CD8-positive, alpha-beta T cell (primary cell): ENCODE measurements at regions of chr4 and their contacts with region 1.

Region 1: DNA sequence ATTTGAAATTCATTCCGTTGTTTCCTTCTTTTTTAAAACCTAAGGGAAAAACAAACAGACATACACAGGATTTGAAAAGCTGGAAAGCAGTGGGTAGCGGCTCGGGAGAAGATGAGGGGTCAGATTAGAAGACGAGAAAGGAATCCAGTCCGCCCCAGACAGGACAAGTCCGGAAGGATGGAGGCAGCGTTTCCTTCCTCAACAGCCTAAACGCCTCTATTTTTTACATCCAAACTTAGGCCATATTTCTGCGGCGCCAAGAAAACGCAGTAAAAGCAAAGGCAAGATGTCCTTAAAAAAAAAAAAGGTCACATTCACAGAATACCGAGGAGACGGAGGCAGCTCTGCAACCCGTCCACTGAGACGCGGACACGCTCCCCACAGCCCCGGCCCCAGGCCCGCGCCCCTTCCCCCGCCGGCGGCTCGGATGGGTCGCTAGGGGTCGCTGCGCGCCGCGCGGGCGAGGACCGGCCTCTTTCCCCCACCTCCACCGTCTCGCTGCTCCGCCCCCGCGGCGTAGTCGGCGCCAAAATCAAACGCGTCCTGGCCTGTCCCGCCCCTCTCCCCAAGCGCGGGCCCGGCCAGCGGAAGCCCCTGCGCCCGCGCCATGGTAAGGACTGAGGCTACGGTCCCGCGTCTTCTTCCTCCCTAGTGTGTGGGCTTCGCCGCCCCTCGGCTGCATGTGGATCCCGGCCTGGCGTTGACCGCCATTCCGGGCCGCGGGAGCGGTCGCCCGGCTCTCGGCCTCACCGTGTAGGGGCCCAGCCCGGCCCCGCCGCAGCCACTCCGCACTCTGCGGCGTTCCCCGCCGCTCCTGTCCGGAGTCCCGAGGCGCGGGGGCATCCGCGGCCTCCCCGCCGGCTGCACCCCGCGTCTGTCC is at the start of gene MND1:
- DNase-seq: peak; percentile 77 to 93 (median 89)
- ATAC-seq: peak; percentile 93
- H3K4me3 ChIP-seq: peak within 1 kb of the TSS; percentile 49 to 66
- H3K4me3 Mint-ChIP-seq: peak within 1 kb of the TSS; percentile 87
- H3K27ac ChIP-seq: no peak within 1 kb of the TSS
- H3K27ac Mint-ChIP-seq: peak within 1 kb of the TSS; percentile 58
- H3K4me1 ChIP-seq: no peaks in the 10 kb centered on the region
- H3K4me1 Mint-ChIP-seq: peaks cover 6% of the 10 kb centered on the region
- H3K27me3 ChIP-seq: no peaks in the 10 kb centered on the region
- H3K27me3 Mint-ChIP-seq: no peaks in the 10 kb centered on the region
- CTCF ChIP-seq: peak; percentile 99
- total RNA-seq, gene MND1: not detected

Region 2: DNA sequence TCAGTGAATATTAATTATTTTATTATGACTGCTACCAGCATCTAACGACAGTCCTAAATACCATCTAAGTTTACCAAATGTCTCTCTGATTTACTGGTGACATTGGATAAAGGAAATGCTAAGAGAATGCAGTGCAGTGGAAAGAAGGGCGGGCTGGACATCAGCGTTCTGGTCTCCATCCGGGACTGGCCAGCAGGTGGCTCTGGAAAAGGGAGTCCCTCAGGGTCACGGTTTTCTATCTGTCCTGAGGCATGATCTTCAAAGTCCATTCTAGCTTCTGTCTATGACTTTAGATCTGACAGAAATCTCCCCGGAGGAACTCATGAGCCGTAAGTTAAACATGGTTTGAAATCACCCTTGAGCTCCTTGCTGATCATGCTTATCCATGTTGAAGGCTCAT is 136.8 kb before region 1 on chr4:
- CTCF ChIA-PET with region 1: no interaction called
- POLR2A ChIA-PET with region 1: no interaction called
- intact Hi-C with region 1: no loop called
- DNase-seq: no peak
- ATAC-seq: no peak
- H3K4me3 ChIP-seq: no peak overlapping the region
- H3K4me3 Mint-ChIP-seq: no peak overlapping the region
- H3K27ac ChIP-seq: no peak overlapping the region
- H3K27ac Mint-ChIP-seq: no peak overlapping the region
- H3K4me1 ChIP-seq: peaks cover 20% of the 10 kb centered on the region
- H3K4me1 Mint-ChIP-seq: peaks cover 23% of the 10 kb centered on the region
- H3K27me3 ChIP-seq: no peaks in the 10 kb centered on the region
- H3K27me3 Mint-ChIP-seq: no peaks in the 10 kb centered on the region
- CTCF ChIP-seq: no peak

Region 3: DNA sequence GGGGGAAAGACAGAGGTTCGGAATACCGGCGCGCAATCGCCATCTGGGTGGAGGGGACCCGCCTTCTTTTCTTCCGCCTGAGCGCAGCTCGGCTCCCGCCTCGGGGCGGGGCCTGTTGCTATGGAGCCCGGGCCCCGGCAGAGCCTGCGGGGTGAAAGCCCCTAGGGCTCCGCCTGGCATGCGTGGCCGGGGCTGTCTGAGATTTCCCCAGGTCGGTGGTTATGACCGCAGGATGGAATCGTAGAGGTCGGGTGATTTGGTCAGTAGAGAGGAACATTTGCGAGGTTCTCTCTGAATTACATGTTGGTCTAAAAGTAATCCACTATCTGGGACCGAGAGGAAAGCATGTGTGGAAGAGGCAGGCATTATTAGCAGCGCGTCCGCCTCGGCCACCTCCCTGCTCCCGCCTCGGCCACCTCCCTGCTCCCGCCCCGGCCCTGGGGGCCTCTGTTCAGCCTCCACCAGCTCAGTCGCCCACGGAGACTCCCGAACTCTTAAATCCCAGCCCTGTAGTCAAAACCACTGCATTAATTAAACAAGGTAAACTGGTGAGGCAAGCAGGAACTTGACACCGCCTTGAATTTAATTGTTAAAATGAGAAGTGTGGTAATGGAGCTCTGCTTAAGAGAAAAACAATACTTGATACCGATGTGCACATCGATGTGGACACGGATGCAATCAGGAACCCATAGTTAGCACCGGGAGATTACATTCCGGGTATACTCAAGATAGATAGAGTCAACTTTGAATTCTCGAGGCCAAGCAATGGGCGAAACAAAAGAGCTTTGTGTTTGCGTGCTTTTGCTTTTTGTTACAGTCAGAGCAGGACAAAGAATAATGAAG is 95.0 kb before region 1 on chr4:
- CTCF ChIA-PET with region 1: no interaction called
- POLR2A ChIA-PET with region 1: no interaction called
- intact Hi-C with region 1: loop called in 1 of 2 experiments (anchors 5 kb)
- DNase-seq: peak; percentile 59 to 94 (median 81)
- ATAC-seq: peak; percentile 98
- H3K4me3 ChIP-seq: peak overlapping the region; percentile 53 to 57
- H3K4me3 Mint-ChIP-seq: peak overlapping the region; percentile 89
- H3K27ac ChIP-seq: peak overlapping the region; percentile 46 to 60
- H3K27ac Mint-ChIP-seq: peak overlapping the region; percentile 85
- H3K4me1 ChIP-seq: peaks cover 11% of the 10 kb centered on the region
- H3K4me1 Mint-ChIP-seq: peaks cover 20% of the 10 kb centered on the region
- H3K27me3 ChIP-seq: no peaks in the 10 kb centered on the region
- H3K27me3 Mint-ChIP-seq: no peaks in the 10 kb centered on the region
- CTCF ChIP-seq: no peak

Region 4: DNA sequence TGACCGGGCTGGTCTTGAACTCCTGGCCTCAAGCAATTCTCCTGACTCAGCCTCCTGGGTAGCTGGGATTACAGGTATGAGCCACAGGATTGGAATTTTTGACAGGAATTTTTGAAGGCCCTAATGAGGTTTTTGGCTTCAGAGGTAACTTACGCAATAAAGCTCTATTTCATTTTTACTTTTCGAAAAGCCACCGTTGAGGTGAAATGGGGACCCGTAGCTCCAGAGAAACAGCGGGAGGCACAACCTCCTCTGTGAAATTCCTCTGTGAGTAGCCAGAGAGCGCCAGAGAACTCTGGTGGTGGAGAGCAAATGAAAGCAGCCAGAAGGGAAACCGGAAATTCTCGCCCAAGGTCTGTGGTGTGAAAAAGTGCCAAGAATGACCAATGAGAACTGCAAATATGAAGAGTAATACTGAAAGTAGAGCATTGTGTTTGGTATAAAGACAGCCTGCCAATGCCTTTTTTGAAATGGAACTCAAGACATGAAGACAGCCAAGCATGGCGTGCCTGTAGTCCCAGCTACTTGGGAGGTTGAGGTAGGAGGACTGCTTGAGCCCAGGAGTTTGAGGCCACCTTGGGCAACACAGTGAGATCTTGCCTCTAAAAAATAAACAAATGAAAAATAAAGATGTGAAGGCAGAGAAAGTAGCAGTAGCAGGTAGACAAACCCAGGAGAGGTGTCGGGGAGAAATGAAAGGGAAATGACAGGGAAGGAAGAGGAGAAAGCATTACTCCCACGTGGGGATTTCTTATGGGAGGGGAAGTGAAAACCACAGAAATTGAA is 88.8 kb after region 1 on chr4:
- CTCF ChIA-PET with region 1: interaction called, 18 read pairs
- POLR2A ChIA-PET with region 1: no interaction called
- intact Hi-C with region 1: loop called (anchors 2 to 5 kb)
- DNase-seq: peak; percentile 29 to 88 (median 61)
- ATAC-seq: peak; percentile 78
- H3K4me3 ChIP-seq: peak overlapping the region; percentile 0 to 46
- H3K4me3 Mint-ChIP-seq: peak overlapping the region; percentile 77
- H3K27ac ChIP-seq: peak overlapping the region; percentile 6 to 63
- H3K27ac Mint-ChIP-seq: peak overlapping the region; percentile 73
- H3K4me1 ChIP-seq: peaks cover 52% of the 10 kb centered on the region
- H3K4me1 Mint-ChIP-seq: peaks cover 72% of the 10 kb centered on the region
- H3K27me3 ChIP-seq: no peaks in the 10 kb centered on the region
- H3K27me3 Mint-ChIP-seq: no peaks in the 10 kb centered on the region
- CTCF ChIP-seq: peak; percentile 59

Region 5: GRCh38 chr4:153466081-153466948 is 121.9 kb after region 1 on chr4 and contains the start of gene TMEM131L:
- CTCF ChIA-PET with region 1: interaction called, 9 read pairs
- POLR2A ChIA-PET with region 1: interaction called, 5 read pairs
- intact Hi-C with region 1: loop called (anchors 1 kb)
- DNase-seq: peak; percentile 58 to 92 (median 69)
- ATAC-seq: peak; percentile 77
- H3K4me3 ChIP-seq: peak within 1 kb of the TSS; percentile 77 to 94
- H3K4me3 Mint-ChIP-seq: peak within 1 kb of the TSS; percentile 95
- H3K27ac ChIP-seq: peak within 1 kb of the TSS; percentile 76 to 92
- H3K27ac Mint-ChIP-seq: peak within 1 kb of the TSS; percentile 96
- H3K4me1 ChIP-seq: peaks cover 40% of the 10 kb centered on the region
- H3K4me1 Mint-ChIP-seq: peaks cover 44% of the 10 kb centered on the region
- H3K27me3 ChIP-seq: no peaks in the 10 kb centered on the region
- H3K27me3 Mint-ChIP-seq: no peaks in the 10 kb centered on the region
- CTCF ChIP-seq: peak; percentile 35
- total RNA-seq, gene TMEM131L: 80.8 to 83.1 TPM

Region 6: GRCh38 chr4:153649572-153649991 is 305.2 kb after region 1 on chr4:
- CTCF ChIA-PET with region 1: interaction called, 16 read pairs
- POLR2A ChIA-PET with region 1: no interaction called
- intact Hi-C with region 1: loop called in 1 of 2 experiments (anchors 2 kb)
- DNase-seq: no peak
- ATAC-seq: no peak
- H3K4me3 ChIP-seq: no peak overlapping the region
- H3K4me3 Mint-ChIP-seq: no peak overlapping the region
- H3K27ac ChIP-seq: no peak overlapping the region
- H3K27ac Mint-ChIP-seq: no peak overlapping the region
- H3K4me1 ChIP-seq: peaks cover 19% of the 10 kb centered on the region
- H3K4me1 Mint-ChIP-seq: peaks cover 19% of the 10 kb centered on the region
- H3K27me3 ChIP-seq: no peaks in the 10 kb centered on the region
- H3K27me3 Mint-ChIP-seq: no peaks in the 10 kb centered on the region
- CTCF ChIP-seq: no peak

Region 7: GRCh38 chr4:153728660-153729059 is 384.3 kb after region 1 on chr4:
- CTCF ChIA-PET with region 1: no interaction called
- POLR2A ChIA-PET with region 1: no interaction called
- intact Hi-C with region 1: no loop called
- DNase-seq: no peak
- ATAC-seq: no peak
- H3K4me3 ChIP-seq: no peak overlapping the region
- H3K4me3 Mint-ChIP-seq: no peak overlapping the region
- H3K27ac ChIP-seq: no peak overlapping the region
- H3K27ac Mint-ChIP-seq: no peak overlapping the region
- H3K4me1 ChIP-seq: no peaks in the 10 kb centered on the region
- H3K4me1 Mint-ChIP-seq: no peaks in the 10 kb centered on the region
- H3K27me3 ChIP-seq: no peaks in the 10 kb centered on the region
- H3K27me3 Mint-ChIP-seq: peaks cover 3% of the 10 kb centered on the region
- CTCF ChIP-seq: no peak

Region 8: DNA sequence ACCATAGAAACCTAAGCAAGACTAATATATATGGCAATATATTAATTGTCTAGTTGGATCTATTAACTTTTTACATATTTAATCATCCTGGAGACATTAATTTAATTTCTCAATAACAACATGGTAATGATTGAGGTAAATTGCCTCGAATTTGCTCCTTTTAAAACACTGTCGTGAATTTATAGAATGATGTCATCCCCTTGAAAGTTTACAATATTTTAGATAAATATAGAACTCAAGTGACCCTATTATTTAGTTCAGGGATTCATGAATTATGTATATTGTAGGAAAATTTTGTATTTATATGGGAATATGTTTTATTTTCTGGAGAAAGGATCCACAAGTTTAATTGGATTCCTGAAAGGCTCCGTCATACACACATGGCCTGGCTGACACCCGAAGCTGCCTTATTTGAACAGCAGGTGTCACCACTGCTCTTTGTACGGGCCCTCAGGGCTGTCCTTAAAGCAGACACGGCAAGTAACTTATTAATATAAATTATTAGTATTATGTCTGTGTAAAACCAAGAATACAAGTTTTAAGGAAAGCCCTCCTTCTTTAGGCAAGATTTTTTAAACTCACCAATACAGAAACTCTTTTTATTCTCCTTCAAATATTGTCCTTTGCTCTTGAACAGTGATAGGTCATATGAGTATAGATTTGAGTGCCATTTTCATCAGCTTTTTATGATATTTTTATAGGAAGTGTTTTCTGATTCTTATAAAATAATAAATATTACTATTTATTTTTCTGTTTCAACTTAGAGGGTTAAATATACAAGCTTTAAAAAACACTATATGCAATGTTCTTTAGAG is 1207.7 kb after region 1 on chr4:
- CTCF ChIA-PET with region 1: no interaction called
- POLR2A ChIA-PET with region 1: no interaction called
- intact Hi-C with region 1: loop called (anchors 5 to 10 kb)
- DNase-seq: peak; percentile 35 to 84 (median 70)
- ATAC-seq: peak; percentile 45
- H3K4me3 ChIP-seq: no peak overlapping the region
- H3K4me3 Mint-ChIP-seq: no peak overlapping the region
- H3K27ac ChIP-seq: no peak overlapping the region
- H3K27ac Mint-ChIP-seq: no peak overlapping the region
- H3K4me1 ChIP-seq: peaks cover 16% of the 10 kb centered on the region
- H3K4me1 Mint-ChIP-seq: peaks cover 29% of the 10 kb centered on the region
- H3K27me3 ChIP-seq: no peaks in the 10 kb centered on the region
- H3K27me3 Mint-ChIP-seq: no peaks in the 10 kb centered on the region
- CTCF ChIP-seq: peak; percentile 96